ENCODE measurements at regions of chr15 and their contacts with region 1.

Region 1: GRCh38 chr15:35958021-35958420 is 412.1 kb upstream of the DPH6 start:
- DNase-seq: no peak
- ATAC-seq: no peak
- H3K4me3 ChIP-seq: no peak overlapping the region
- H3K27ac ChIP-seq: no peak overlapping the region
- H3K4me1 ChIP-seq: no peaks in the 10 kb centered on the region
- H3K27me3 ChIP-seq: no peaks in the 10 kb centered on the region
- CTCF ChIP-seq: no peak
- POLR2A ChIP-seq: no peak

Region 2: GRCh38 chr15:36024031-36024688 is 66.1 kb after region 1 on chr15:
- intact Hi-C with region 1: loop called in 1 of 10 experiments (anchors 10 kb)
- DNase-seq: peak in 2 of 5 donors; percentile 28 to 35
- ATAC-seq: peak in 1 of 4 donors; percentile 54
- H3K4me3 ChIP-seq: no peak overlapping the region
- H3K27ac ChIP-seq: no peak overlapping the region
- H3K4me1 ChIP-seq: peaks cover 0 to 5% (median 0%) of the 10 kb centered on the region in 12 donors
- H3K27me3 ChIP-seq: no peaks in the 10 kb centered on the region
- CTCF ChIP-seq: no peak
- POLR2A ChIP-seq: no peak

Measured in heart left ventricle (tissue), 16 donors.